MCF 10A (cell line): ENCODE measurements at regions of chr5 and their contacts with region 1.

Region 1: DNA sequence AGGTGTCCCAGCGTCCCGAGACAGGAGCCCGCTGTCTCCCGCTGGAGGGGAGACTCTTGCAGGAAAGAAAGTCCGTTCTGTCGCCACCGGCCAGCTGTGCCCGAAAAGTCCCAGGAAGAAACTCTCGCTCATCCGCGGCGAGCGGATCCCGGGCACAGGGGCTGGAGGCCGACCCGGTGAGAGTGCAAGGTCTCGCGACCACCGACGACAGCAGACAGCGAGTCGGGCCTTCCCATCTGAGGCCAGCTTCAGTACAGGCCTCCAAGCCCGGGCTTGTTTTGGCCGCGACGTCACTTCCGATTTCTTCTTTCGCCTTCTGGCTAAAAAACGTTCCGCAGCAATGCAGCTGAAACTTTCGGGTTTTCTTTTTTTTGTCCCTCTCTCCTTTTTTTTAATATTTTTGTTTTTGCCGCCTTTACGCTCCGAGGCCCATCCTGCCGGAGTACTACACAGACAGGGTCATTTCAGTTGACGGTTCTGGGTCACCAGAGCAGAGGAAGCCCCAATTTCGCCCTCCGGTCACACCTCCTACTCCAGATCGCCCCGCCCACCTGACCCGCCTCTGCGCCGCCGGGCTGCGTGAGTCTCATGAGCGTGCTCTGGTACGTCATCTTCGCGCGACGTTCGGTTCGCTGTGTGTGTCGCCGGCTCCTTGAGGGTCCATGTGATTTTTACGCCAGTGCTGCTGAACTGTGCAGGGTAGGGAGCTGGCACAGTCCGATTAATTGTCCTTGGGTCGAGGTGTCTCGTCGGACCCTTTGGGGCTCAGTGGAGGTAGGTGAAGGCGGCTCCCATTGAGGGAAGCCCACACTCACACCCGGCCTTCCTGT is at the starts of genes ANKRA2 and UTP15:
- DNase-seq: peak; percentile 99
- H3K4me3 Mint-ChIP-seq: peak within 1 kb of the TSS; percentile 84
- H3K27ac Mint-ChIP-seq: peak within 1 kb of the TSS; percentile 94
- H3K4me1 Mint-ChIP-seq: peaks cover 11% of the 10 kb centered on the region
- H3K27me3 Mint-ChIP-seq: no peaks in the 10 kb centered on the region
- CTCF ChIP-seq: no peak
- total RNA-seq, gene ANKRA2: 19.3 and 20.2 TPM in 2 replicates
- total RNA-seq, gene UTP15: 41.2 and 41.3 TPM in 2 replicates

Region 2: GRCh38 chr5:73540192-73540591 is 25.2 kb before region 1 on chr5:
- CTCF ChIA-PET with region 1: interaction called, 12 read pairs
- POLR2A ChIA-PET with region 1: interaction called, 17 read pairs
- intact Hi-C with region 1: no loop called
- DNase-seq: peak; percentile 68
- H3K4me3 Mint-ChIP-seq: no peak overlapping the region
- H3K27ac Mint-ChIP-seq: peak overlapping the region; percentile 61
- H3K4me1 Mint-ChIP-seq: peaks cover 34% of the 10 kb centered on the region
- H3K27me3 Mint-ChIP-seq: no peaks in the 10 kb centered on the region
- CTCF ChIP-seq: no peak

Region 3: DNA sequence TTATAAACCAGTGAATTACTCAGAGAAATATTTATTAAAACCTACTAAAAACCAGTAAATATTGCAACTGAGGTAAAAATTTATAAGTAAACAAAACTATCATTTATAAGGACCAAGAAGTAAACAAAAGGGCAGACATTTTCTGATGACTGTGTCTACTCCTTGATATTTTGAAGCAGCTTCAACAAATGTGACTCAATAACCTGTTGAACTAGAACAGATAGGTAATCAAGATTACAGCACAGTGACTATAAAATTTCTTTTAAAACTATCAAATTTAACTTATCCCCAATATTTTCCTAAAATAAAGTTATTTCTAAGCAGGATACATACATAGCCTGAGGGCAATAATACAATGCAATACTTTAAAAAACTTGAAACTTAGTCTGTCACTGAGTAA is 12.7 kb before region 1 on chr5:
- CTCF ChIA-PET with region 1: interaction called, 4 read pairs
- POLR2A ChIA-PET with region 1: interaction called, 48 read pairs
- intact Hi-C with region 1: no loop called
- DNase-seq: no peak
- H3K4me3 Mint-ChIP-seq: no peak overlapping the region
- H3K27ac Mint-ChIP-seq: no peak overlapping the region
- H3K4me1 Mint-ChIP-seq: no peaks in the 10 kb centered on the region
- H3K27me3 Mint-ChIP-seq: no peaks in the 10 kb centered on the region
- CTCF ChIP-seq: no peak

Region 4: GRCh38 chr5:73582285-73583145 is 17.2 kb after region 1 on chr5:
- CTCF ChIA-PET with region 1: interaction called, 3 read pairs
- POLR2A ChIA-PET with region 1: interaction called, 15 read pairs
- intact Hi-C with region 1: no loop called
- DNase-seq: no peak
- H3K4me3 Mint-ChIP-seq: no peak overlapping the region
- H3K27ac Mint-ChIP-seq: no peak overlapping the region
- H3K4me1 Mint-ChIP-seq: no peaks in the 10 kb centered on the region
- H3K27me3 Mint-ChIP-seq: no peaks in the 10 kb centered on the region
- CTCF ChIP-seq: no peak